ENCODE measurements at regions of chr19 and their contacts with region 1.

Region 1: DNA sequence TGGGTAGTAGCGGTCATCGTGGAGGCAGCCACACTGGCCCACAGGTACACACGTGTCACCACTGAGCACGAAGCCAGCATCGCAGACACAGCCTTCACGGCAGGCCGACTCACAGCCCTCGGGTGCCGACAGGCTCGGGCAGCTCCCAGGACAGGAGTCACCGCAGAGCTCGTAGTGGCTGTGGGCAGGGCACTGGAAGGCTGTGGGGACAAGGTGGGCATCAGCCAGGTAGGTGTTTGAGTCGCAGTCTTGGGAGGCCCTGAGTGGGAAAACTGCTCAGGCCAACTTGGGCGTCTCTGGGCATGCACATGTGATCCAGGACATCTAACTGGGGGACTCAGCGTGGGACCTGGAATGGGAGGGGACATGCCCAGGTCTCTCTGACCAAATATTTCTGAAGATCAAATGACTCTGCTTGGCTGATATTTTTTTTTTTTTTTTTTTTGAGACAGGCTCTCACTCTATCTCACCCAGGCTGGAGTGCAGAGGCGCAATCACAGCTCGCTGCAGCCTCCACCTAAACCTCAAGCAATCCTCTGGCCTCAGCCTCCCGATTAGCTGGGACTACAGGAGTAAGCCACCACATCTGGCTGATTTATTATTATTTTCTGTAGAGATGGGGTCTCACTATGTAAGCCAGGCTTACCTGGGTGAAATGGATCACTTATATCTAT is 43.8 kb upstream of the FBL start:
- DNase-seq: peak in 2 of 6 donors; percentile 62 to 82
- ATAC-seq: no peak
- H3K4me3 ChIP-seq: no peak overlapping the region
- H3K27ac ChIP-seq: no peak overlapping the region
- H3K4me1 ChIP-seq: peaks cover 0 to 4% (median 0%) of the 10 kb centered on the region in 3 donors
- H3K27me3 ChIP-seq: no peaks in the 10 kb centered on the region
- CTCF ChIP-seq: no peak

Region 2: GRCh38 chr19:39846678-39847486 is 43.1 kb before region 1 on chr19:
- intact Hi-C with region 1: no loop called
- DNase-seq: no peak
- ATAC-seq: peak; percentile 3 to 17 (median 10)
- H3K4me3 ChIP-seq: peak overlapping the region; percentile 4 to 73 (median 67)
- H3K27ac ChIP-seq: peak overlapping the region; percentile 52 to 82 (median 60)
- H3K4me1 ChIP-seq: peaks cover 11 to 23% (median 13%) of the 10 kb centered on the region in 3 donors
- H3K27me3 ChIP-seq: no peaks in the 10 kb centered on the region
- CTCF ChIP-seq: no peak

Region 3: GRCh38 chr19:39969681-39970424 is 79.8 kb after region 1 on chr19:
- intact Hi-C with region 1: loop called in 1 of 3 experiments (anchors 10 kb)
- DNase-seq: no peak
- ATAC-seq: no peak
- H3K4me3 ChIP-seq: peak overlapping the region; percentile 16 to 93 (median 68)
- H3K27ac ChIP-seq: peak overlapping the region; percentile 61 to 91 (median 79)
- H3K4me1 ChIP-seq: peaks cover 0 to 7% (median 6%) of the 10 kb centered on the region in 3 donors
- H3K27me3 ChIP-seq: no peaks in the 10 kb centered on the region
- CTCF ChIP-seq: no peak

Region 4: DNA sequence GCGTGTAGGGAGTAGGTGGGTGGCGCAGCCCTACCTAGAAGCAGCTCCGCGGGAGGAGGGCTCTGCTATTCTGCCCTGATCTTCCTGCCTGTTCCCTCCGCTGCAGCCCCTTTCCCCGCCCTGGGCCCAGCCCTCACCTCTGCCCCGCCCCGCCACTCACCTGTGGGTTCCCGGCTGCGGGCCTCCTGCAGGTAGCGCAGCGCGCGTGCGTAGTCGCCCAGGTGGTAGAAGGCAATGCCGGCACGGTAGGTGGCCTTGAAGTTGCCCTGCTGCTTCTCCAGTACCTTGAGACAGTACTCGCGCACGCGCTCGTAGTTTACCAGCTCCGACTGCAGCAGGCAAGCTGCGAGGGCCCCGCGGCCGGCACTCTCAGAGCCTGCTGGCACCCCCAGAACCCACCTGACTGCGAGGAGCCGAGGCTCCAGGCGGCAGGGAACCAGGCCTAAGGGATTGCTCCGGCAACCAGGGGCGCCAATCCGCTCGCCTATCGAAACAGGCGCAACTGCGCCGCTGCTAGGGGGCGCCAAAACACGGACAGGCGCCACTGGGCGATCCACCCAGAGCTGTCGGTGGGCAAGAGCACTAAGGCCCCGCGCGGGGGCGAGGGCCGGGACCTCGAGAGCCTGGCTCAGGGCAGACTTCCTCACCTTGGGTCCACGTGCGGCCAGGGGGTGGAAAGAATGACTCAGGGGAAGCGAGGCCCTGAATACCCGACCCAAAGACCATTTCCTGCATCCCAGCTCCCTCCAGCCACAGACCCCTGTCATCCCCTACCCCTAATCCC is 327.2 kb after region 1 on chr19:
- intact Hi-C with region 1: no loop called
- DNase-seq: peak; percentile 73 to 93 (median 79)
- ATAC-seq: peak; percentile 69 to 88 (median 80)
- H3K4me3 ChIP-seq: peak overlapping the region in 1 of 4 donors; percentile 8
- H3K27ac ChIP-seq: no peak overlapping the region
- H3K4me1 ChIP-seq: no peaks in the 10 kb centered on the region
- H3K27me3 ChIP-seq: peaks cover 0 to 11% (median 2%) of the 10 kb centered on the region in 4 donors
- CTCF ChIP-seq: no peak

Measured in pancreas (tissue), 10 donors.